H1 (cell line): ENCODE measurements at regions of chr3 and their contacts with region 1.

Region 1: DNA sequence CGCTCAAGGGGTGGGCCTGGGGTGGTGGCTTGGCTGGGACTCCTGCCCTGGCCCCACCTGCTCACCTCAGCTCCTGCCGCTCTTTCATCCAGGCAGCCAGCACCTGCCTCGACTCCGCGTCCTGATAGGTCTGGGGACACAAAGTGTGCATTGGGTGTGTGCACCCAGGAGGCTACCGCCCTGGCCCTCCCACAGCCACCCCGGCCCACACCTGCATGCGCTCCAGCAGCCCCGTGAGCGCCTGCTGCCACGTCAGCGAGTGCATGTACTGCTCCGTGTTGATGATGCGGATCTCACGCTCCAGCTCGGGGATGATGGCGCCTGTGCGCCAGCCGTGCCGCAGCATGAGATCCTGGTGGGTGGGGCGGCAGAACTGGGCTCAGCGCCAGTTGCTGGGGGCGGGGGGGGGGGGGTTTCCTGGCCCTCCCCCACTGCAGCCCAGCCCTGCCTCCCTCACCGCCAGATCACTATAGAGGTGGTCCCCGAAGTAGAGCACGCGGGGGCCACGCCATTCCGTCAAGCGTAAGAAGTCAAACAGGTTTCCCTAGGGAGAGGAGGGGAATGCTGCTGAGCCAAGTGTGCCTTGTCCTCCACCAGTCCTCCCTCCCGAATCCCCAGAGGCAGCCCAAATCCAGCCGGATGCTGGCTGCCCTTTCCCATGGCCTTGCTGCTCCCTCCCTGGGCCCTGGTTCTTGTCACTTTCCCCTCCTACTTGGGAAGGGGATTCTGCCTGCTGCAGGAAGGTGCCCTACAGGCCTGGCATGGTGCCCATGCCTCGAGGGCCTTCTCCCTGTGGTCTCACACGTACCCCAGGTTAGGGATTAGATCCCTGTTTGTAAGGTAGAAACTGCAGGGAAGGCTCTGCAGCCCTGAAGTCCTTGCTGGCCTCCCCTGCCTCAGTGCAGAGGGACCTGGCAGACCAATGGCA is 8.6 kb downstream of the NT5DC2 start:
- DNase-seq: no peak
- H3K4me3 ChIP-seq: no peak overlapping the region
- H3K27ac ChIP-seq: no peak overlapping the region
- H3K4me1 ChIP-seq: no peaks in the 10 kb centered on the region
- H3K27me3 ChIP-seq: no peaks in the 10 kb centered on the region
- CTCF ChIP-seq: no peak
- EP300 ChIP-seq: no peak
- POLR2A ChIP-seq: no peak
- RAD21 ChIP-seq: no peak

Region 2: GRCh38 chr3:52490939-52491526 is 34.0 kb before region 1 on chr3:
- CTCF ChIA-PET with region 1: no interaction called
- POLR2A ChIA-PET with region 1: interaction called, 16 read pairs
- DNase-seq: no peak
- H3K4me3 ChIP-seq: no peak overlapping the region
- H3K27ac ChIP-seq: no peak overlapping the region
- H3K4me1 ChIP-seq: peaks cover 0 to 6% (median under 1%) of the 10 kb centered on the region in 4 experiments; a peak in 3 of 7 replicates
- H3K27me3 ChIP-seq: no peaks in the 10 kb centered on the region; a peak in 1 of 7 replicates
- CTCF ChIP-seq: no peak
- EP300 ChIP-seq: no peak
- POLR2A ChIP-seq: no peak
- RAD21 ChIP-seq: no peak

Region 3: DNA sequence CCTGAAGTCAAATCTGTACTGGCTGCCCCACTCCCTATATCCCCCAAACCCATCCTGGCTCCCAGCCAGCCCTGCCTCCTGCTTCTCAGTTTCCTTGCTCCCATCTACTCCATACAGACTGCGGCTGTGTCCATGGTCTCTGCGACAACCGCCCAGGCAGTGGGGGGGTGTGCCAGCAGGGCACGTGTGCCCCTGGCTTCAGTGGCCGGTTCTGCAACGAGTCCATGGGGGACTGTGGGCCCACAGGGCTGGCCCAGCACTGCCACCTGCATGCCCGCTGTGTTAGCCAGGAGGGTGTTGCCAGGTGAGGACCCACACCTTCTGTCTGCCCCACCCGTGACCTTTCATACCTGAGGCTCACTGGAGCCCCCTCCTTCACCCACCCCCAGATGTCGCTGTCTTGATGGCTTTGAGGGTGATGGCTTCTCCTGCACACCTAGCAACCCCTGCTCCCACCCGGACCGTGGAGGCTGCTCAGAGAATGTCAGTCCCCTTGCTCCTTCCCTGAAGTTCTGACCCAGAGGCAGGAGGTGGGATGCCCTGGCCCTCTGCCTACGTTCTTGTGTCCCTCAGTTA is 15.2 kb before region 1 on chr3:
- CTCF ChIA-PET with region 1: interaction called, 4 read pairs
- POLR2A ChIA-PET with region 1: interaction called, 16 read pairs
- DNase-seq: no peak
- H3K4me3 ChIP-seq: no peak overlapping the region
- H3K27ac ChIP-seq: no peak overlapping the region
- H3K4me1 ChIP-seq: peaks cover 0 to 4% (median 0%) of the 10 kb centered on the region in 4 experiments; a peak in 1 of 7 replicates
- H3K27me3 ChIP-seq: no peaks in the 10 kb centered on the region
- CTCF ChIP-seq: peak in 1 of 3 experiments; percentile 12; a peak in 1 of 4 replicates
- EP300 ChIP-seq: no peak
- POLR2A ChIP-seq: no peak
- RAD21 ChIP-seq: 0 out of 4 replicates have a peak, but pooled peaks of 1 of the 2 experiments have one; percentile 22

Region 4: DNA sequence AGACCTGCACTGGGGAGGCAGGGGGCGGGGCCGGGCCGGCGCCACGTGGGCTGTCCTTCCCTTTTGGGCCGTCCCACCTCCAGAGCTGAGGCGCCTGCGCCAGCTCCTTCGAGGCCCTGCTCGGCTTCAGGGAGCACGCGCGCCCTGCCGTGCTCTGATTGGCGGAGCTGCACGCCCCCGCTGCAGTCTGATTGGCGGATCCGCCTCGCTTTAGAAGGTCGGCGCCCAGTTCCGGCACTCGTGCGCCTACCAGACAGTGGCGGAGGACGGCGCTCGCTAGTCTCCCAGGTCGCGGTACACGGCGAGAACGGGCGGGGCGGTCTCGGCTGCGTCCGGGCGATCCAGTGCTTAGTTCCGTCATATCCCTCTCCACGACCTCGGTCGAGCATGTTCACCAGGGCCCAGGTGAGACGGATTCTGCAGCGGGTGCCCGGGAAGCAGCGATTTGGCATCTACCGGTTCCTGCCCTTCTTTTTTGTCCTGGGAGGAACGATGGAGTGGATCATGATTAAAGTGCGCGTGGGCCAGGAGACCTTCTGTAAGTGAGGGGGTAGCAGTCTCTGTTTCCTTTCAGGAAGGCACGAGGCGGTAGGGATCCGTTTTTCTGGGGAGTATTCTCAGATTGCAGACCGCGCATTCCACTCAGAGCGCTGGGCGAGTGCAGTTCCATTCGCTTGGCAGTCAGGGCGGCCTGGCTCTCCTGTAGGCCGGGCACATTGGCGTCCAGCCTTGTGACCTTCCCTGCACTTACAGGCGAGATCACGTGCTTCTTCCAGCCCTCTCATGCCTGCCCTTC is 11.6 kb after region 1 on chr3 and contains the start of gene UQCC5:
- CTCF ChIA-PET with region 1: interaction called, 4 read pairs
- POLR2A ChIA-PET with region 1: interaction called, 25 read pairs
- DNase-seq: peak; percentile 94 to 96
- H3K4me3 ChIP-seq: peak within 1 kb of the TSS; percentile 81 to 91 (median 88)
- H3K27ac ChIP-seq: peak within 1 kb of the TSS; percentile 77
- H3K4me1 ChIP-seq: peaks cover 7 to 33% (median 19%) of the 10 kb centered on the region in 4 experiments
- H3K27me3 ChIP-seq: no peaks in the 10 kb centered on the region
- CTCF ChIP-seq: no peak
- EP300 ChIP-seq: no peak
- POLR2A ChIP-seq: peak in 1 of 2 experiments; percentile 97; a peak in 2 of 3 replicates
- RAD21 ChIP-seq: peak in 1 of 2 experiments; percentile 11; a peak in 1 of 4 replicates
- total RNA-seq, gene UQCC5: 37.7 and 39.3 TPM in 2 replicates